H1 (cell line): ENCODE measurements at regions of chr5 and their contacts with region 1.

Region 1: DNA sequence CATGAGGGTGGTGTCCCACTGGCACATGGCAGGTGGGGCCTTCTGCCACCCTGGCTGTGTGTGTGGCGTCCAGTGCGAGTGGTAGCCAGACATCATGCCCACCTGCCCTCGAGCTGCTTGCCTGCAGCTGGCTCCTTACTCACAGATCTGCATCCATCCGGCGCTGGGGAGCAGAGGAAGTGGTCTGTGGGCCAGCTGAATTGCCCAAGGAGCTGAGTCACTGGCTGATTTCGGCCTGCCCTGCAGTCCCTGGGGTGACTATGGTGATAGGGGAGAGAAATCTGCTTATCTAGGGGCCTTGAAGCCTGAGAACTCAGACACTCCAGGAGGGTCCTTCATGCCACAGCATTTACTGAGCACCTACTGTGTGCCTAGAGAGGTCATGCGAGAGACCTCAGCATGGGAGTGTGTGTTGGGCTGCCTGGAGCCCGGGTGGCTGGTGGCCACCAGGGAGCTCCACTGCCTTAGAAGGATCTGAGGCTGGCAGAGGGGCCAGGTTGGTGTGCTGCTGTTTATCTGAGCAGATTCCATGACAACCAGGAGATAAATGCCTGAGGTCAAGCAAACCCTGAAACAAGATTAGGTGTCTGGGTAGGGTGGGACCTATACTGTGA is 57.1 kb downstream of the SLC22A5 start:
- DNase-seq: peak in 1 of 2 experiments; percentile 51
- H3K4me3 ChIP-seq: no peak overlapping the region
- H3K27ac ChIP-seq: no peak overlapping the region; the same call in 1 of the 2 replicates
- H3K4me1 ChIP-seq: peaks cover 0 to 9% (median 5%) of the 10 kb centered on the region in 4 experiments; a peak in 5 of 7 replicates
- H3K27me3 ChIP-seq: no peaks in the 10 kb centered on the region; a peak in 1 of 7 replicates
- CTCF ChIP-seq: peak; percentile 51 to 66 (median 63)
- EP300 ChIP-seq: 0 out of 3 replicates have a peak, but pooled peaks of 1 of the 2 experiments have one; percentile 26
- POLR2A ChIP-seq: no peak
- RAD21 ChIP-seq: peak; percentile 60 to 79

Region 2: DNA sequence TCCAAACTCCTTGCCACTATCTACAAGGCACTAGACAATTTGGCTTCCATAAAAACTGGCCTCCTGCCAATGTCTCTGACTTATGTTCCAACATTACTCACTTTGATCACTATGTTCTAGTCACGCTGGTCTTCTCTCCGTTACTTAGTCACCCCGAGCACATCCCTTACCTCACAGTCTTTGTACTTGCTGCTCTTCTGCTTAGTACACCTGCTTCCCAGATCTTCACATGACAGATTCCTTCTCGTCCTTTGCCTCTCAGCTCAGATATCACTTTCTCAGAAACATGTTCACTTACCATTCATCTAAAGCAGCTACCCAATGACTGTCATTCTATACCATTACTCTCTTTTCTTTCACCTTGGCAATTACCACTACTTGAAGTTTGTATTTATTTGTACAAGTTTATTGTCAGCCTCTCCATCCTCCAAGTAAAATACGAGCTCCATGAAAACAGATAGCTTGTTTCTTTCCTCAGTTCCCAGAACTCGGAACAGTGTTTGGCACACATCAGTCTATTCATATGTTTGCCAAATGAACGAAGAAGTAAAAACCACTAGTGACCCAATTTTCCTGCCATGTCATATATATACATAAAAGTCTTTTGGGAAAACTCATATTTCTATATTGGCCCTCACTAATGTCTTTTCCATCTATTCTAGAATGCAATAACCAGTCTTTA is 63.1 kb before region 1 on chr5:
- CTCF ChIA-PET with region 1: no interaction called
- POLR2A ChIA-PET with region 1: no interaction called
- DNase-seq: no peak
- H3K4me3 ChIP-seq: no peak overlapping the region
- H3K27ac ChIP-seq: no peak overlapping the region
- H3K4me1 ChIP-seq: no peaks in the 10 kb centered on the region
- H3K27me3 ChIP-seq: no peaks in the 10 kb centered on the region
- CTCF ChIP-seq: no peak
- EP300 ChIP-seq: no peak
- POLR2A ChIP-seq: no peak
- RAD21 ChIP-seq: no peak

Region 3: GRCh38 chr5:132386644-132387286 is 39.9 kb before region 1 on chr5:
- CTCF ChIA-PET with region 1: interaction called, 13 read pairs
- POLR2A ChIA-PET with region 1: no interaction called
- DNase-seq: peak in 1 of 2 experiments; percentile 81
- H3K4me3 ChIP-seq: no peak overlapping the region
- H3K27ac ChIP-seq: no peak overlapping the region
- H3K4me1 ChIP-seq: peaks cover 0 to 9% (median 3%) of the 10 kb centered on the region in 4 experiments; a peak in 4 of 7 replicates
- H3K27me3 ChIP-seq: no peaks in the 10 kb centered on the region
- CTCF ChIP-seq: peak; percentile 84 to 90 (median 86)
- EP300 ChIP-seq: no peak
- POLR2A ChIP-seq: no peak
- RAD21 ChIP-seq: peak; percentile 92 to 93

Region 4: GRCh38 chr5:132410451-132411381 is 15.9 kb before region 1 on chr5:
- CTCF ChIA-PET with region 1: interaction called, 12 read pairs
- POLR2A ChIA-PET with region 1: no interaction called
- DNase-seq: peak in 1 of 2 experiments; percentile 91
- H3K4me3 ChIP-seq: peak overlapping the region; percentile 36 to 79 (median 58)
- H3K27ac ChIP-seq: peak overlapping the region; percentile 40; the same call in 1 of the 2 replicates
- H3K4me1 ChIP-seq: peaks cover 0 to 4% (median under 1%) of the 10 kb centered on the region in 4 experiments; a peak in 3 of 7 replicates
- H3K27me3 ChIP-seq: 0 out of 7 replicates have a peak, but pooled peaks cover 0 to 3% (median 0%) of the 10 kb centered on the region in 4 experiments
- CTCF ChIP-seq: peak; percentile 68 to 88 (median 82)
- EP300 ChIP-seq: no peak
- POLR2A ChIP-seq: peak in 1 of 2 experiments; percentile 55; a peak in 2 of 3 replicates
- RAD21 ChIP-seq: peak; percentile 61 to 78

Region 5: GRCh38 chr5:132437604-132438266 is 11.1 kb after region 1 on chr5:
- CTCF ChIA-PET with region 1: interaction called, 20 read pairs
- POLR2A ChIA-PET with region 1: interaction called, 8 read pairs
- DNase-seq: no peak
- H3K4me3 ChIP-seq: no peak overlapping the region
- H3K27ac ChIP-seq: no peak overlapping the region
- H3K4me1 ChIP-seq: peaks cover 0 to 7% (median 4%) of the 10 kb centered on the region in 4 experiments; a peak in 3 of 7 replicates
- H3K27me3 ChIP-seq: no peaks in the 10 kb centered on the region; a peak in 1 of 7 replicates
- CTCF ChIP-seq: no peak
- EP300 ChIP-seq: no peak
- POLR2A ChIP-seq: no peak
- RAD21 ChIP-seq: no peak

Region 6: DNA sequence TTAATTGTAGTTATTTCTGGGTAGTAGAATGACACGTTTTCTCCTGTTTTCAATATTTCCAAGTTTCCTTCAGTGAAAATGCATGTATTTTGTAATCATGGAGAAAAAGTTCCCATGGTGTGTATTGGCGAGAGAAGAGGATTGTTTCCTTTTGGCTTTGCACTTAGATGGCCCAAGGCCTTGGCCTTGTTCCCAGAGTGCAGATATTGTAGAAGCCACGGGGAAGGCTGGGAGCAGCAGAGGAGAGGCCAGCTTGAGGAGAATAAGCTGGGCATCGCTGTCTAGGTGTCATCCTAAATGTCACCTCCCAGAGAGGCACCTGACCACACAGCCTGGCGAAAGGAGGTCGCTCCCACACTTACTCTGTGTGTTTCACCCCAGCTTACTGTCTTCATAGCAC is 20.0 kb after region 1 on chr5:
- CTCF ChIA-PET with region 1: interaction called, 17 read pairs
- POLR2A ChIA-PET with region 1: interaction called, 3 read pairs
- DNase-seq: no peak
- H3K4me3 ChIP-seq: no peak overlapping the region
- H3K27ac ChIP-seq: no peak overlapping the region
- H3K4me1 ChIP-seq: peaks cover 8 to 16% (median 12%) of the 10 kb centered on the region in 4 experiments
- H3K27me3 ChIP-seq: no peaks in the 10 kb centered on the region
- CTCF ChIP-seq: no peak
- EP300 ChIP-seq: no peak
- POLR2A ChIP-seq: no peak
- RAD21 ChIP-seq: no peak

Region 7: DNA sequence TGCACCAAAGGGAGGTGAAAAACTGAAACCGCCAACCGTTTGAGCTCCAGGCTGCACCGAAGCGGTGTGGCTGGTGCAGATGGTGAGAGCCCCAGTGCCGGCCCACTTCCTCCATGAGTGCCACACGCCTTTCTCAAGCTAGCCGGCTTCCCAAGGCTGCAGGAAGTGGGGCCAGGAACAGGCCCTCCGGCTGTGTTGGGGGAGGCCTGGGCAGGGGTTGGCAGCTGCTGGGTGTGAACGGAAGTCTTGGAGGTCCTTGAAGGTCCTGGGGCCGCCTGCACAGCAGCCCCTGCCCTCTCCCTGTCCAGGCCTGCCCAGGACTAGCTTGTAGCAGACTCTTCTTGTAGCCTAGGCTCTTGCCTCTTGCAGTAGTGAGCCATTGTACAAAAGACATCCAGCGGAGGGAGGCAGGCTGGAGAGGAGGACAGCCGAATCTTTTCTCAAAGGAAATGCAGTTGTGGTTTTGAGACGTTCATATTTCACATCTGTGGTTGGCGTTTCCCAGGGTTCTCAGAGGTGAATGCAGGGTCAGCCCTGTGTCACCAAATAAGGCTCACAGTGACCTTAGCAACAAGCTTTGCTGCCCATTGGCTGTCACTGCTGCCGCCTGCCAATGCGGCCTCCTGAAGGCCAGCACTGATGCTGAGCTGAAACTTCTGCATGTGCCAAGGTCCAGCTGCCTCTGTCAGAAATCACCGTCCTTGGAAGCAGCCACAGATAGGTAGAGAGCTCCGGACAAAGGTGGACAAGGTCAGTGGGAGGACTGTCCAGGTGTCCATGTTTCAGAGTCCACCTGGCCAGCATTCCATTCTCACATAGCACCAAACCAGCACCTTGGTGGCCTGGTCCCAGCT is 40.0 kb after region 1 on chr5:
- CTCF ChIA-PET with region 1: interaction called, 24 read pairs
- POLR2A ChIA-PET with region 1: interaction called, 4 read pairs
- DNase-seq: no peak
- H3K4me3 ChIP-seq: no peak overlapping the region
- H3K27ac ChIP-seq: no peak overlapping the region
- H3K4me1 ChIP-seq: peaks cover 6 to 19% (median 11%) of the 10 kb centered on the region in 4 experiments
- H3K27me3 ChIP-seq: no peaks in the 10 kb centered on the region
- CTCF ChIP-seq: no peak
- EP300 ChIP-seq: peak in 1 of 2 experiments; percentile 7; a peak in 1 of 3 replicates
- POLR2A ChIP-seq: no peak
- RAD21 ChIP-seq: no peak

Region 8: GRCh38 chr5:132586063-132586462 is 159.4 kb after region 1 on chr5:
- CTCF ChIA-PET with region 1: no interaction called
- POLR2A ChIA-PET with region 1: no interaction called
- DNase-seq: no peak
- H3K4me3 ChIP-seq: no peak overlapping the region
- H3K27ac ChIP-seq: no peak overlapping the region
- H3K4me1 ChIP-seq: no peaks in the 10 kb centered on the region
- H3K27me3 ChIP-seq: no peaks in the 10 kb centered on the region
- CTCF ChIP-seq: no peak
- EP300 ChIP-seq: no peak
- POLR2A ChIP-seq: no peak
- RAD21 ChIP-seq: no peak